ENCODE measurements at regions of chr1 and their contacts with region 1.

Region 1: GRCh38 chr1:3564921-3565827 is 46.1 kb downstream of the MEGF6 start:
- DNase-seq: no peak
- ATAC-seq: no peak

Region 2: DNA sequence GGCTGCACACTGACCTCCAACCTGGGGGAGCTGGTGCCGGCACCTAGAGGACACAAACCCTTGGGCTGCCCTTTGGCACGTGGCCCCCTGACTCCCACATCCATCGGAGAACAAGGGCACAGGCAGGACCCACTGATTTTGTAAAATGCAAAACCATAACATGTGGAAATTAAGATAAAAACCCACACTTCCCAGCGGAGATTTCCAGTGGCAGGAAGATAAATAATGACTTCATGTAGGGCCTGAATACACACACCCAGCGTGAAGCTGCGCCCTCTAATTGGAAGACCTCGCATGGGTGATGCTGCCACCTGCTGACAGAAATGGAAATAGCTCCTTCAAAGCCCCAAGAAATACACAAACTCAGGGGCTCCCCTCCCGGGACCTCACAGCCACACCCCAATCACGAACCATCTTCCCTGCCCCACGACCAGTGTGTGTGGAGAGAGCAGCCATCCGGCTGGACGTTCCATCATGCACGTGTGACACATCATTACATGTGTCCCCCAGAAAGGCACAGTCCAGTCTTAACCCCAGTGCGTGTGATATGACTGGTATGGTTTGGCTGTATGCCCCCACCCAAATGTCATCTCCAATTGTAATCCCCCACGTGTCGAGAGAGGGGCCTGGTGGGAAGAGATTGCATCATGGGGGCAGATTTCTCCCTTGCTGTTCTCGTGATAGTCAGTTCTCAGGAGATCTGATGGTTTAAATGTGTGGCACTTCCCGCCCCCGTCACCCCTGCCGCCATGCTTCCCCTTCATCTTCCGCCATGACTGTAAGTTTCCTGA is 53.9 kb after region 1 on chr1:
- intact Hi-C with region 1: loop called (anchors 1 kb)
- DNase-seq: no peak
- ATAC-seq: peak; percentile 64